ENCODE measurements at regions of chr16 and their contacts with region 1.

Region 1: GRCh38 chr16:83826146-83826913 is 18.6 kb downstream of the HSBP1 start:
- DNase-seq: peak; percentile 95
- H3K4me3 ChIP-seq: no peak overlapping the region
- H3K27ac ChIP-seq: no peak overlapping the region
- H3K4me1 ChIP-seq: peaks cover 0 to 11% (median 7%) of the 10 kb centered on the region in 4 donors
- H3K27me3 ChIP-seq: no peaks in the 10 kb centered on the region
- CTCF ChIP-seq: peak; percentile 90 to 95 (median 90)
- EP300 ChIP-seq: no peak
- POLR2A ChIP-seq: no peak

Region 2: DNA sequence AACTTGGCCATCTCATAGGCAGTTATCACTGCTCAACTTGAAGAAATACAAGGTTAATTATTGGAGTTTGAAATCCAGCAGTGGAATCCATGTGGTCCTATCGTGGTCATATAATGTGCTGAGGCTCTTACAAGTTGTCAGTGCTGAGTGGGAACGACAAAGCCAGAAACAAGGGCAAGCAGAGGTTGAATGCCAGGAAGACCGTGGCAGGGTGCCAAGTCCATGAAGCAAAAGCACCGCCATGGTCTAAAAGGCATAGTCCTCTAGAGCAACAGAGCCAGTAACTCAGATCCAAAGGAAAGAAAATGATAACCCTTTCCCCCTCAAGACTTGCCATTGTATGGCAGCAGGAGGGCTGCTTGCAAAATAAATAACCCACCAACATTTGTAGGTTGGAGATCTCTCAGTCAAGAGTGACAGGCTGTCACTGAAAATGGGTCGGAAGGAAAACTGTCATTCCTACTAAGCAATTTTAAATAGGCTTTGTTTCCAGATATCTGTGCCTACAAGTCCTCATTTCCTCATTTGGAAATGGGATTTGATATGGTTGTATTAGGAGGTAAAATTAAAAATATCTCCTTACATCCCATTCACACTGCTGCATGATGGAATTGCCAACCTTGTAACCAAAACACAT is 54.9 kb before region 1 on chr16:
- intact Hi-C with region 1: no loop called
- DNase-seq: no peak
- H3K4me3 ChIP-seq: no peak overlapping the region
- H3K27ac ChIP-seq: no peak overlapping the region
- H3K4me1 ChIP-seq: peaks cover 0 to 14% (median 6%) of the 10 kb centered on the region in 4 donors
- H3K27me3 ChIP-seq: no peaks in the 10 kb centered on the region
- CTCF ChIP-seq: no peak
- EP300 ChIP-seq: no peak
- POLR2A ChIP-seq: no peak

Region 3: DNA sequence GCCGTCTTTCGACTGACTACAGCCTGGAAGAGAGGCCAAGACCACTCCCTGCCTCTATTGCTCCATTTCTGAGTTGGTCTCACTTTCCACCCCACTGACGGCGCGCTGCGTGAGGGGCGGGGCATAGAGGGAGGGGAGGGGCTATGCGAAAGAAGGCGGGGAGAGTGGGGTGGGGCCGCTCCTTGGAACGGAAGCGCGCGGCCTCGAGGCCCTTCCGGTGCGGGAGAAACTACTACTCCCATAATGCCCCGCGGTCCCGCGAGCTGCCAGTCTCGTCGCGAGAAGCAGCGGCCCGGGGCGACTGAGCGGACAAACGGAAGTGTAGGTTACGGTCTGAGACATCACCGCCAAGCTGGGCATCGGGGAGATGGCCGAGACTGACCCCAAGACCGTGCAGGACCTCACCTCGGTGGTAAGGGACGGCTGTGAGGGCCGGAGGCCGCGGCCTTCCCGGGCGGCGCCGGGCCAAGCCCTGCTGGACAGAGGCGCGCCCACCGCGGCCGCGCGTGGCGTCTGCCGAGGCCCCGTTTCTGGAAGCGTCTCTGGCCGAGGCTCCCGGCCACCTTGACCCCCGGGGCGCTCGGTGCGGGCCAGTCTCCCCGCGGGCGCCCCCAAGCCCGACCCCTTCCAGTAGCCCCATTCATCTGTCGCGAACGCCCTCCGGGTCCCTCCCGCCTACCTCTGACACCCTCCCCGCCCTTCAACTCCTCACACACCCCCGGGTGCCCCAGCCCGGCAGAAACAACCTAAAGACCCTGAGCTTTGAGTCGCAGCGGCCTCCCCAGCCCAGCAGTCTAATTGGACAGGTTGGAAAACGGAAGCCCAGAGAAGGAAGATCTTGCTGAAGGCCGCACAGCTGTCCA is 18.4 kb before region 1 on chr16 and contains the start of gene HSBP1:
- intact Hi-C with region 1: no loop called
- DNase-seq: peak; percentile 99
- H3K4me3 ChIP-seq: peak within 1 kb of the TSS; percentile 90 to 95 (median 90)
- H3K27ac ChIP-seq: peak within 1 kb of the TSS; percentile 81 to 87 (median 85)
- H3K4me1 ChIP-seq: peaks cover 37 to 50% (median 39%) of the 10 kb centered on the region in 4 donors
- H3K27me3 ChIP-seq: no peaks in the 10 kb centered on the region
- CTCF ChIP-seq: peak in 2 of 3 experiments; percentile 10 to 19
- EP300 ChIP-seq: no peak
- POLR2A ChIP-seq: no peak
- total RNA-seq, gene HSBP1: 12.0 to 49.8 (median 26.4) TPM

Region 4: DNA sequence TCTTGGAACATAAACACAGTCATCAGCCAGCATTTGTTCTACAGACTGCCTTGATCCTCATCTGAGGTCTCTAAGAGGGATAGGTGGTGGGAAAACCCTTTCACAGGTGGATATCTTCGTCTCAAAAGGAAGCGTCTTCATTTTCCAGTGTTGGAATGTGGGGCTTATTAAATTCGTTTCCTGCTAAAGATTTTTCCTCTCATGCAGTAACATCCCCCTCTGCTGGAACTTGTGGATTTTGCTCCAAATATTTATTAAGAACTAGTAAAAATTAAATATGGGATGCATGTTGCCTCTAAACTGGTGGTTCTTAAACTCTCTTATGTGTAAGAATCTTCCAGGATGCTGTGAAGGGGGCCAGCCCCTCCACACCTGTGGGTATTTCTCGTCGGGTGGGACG is 52.5 kb after region 1 on chr16:
- intact Hi-C with region 1: loop called (anchors 1 kb)
- DNase-seq: no peak
- H3K4me3 ChIP-seq: no peak overlapping the region
- H3K27ac ChIP-seq: no peak overlapping the region
- H3K4me1 ChIP-seq: peaks cover 0 to 2% (median 0%) of the 10 kb centered on the region in 4 donors
- H3K27me3 ChIP-seq: no peaks in the 10 kb centered on the region
- CTCF ChIP-seq: peak; percentile 46 to 56 (median 51)
- EP300 ChIP-seq: no peak
- POLR2A ChIP-seq: no peak